MCF 10A (cell line): ENCODE measurements at regions of chr4 and their contacts with region 1.

Region 1: GRCh38 chr4:183261953-183262775 is 57.9 kb downstream of the CLDN22 start:
- DNase-seq: peak; percentile 84
- H3K4me3 Mint-ChIP-seq: no peak overlapping the region
- H3K27ac Mint-ChIP-seq: peak overlapping the region; percentile 52
- H3K4me1 Mint-ChIP-seq: peaks cover 5% of the 10 kb centered on the region
- H3K27me3 Mint-ChIP-seq: no peaks in the 10 kb centered on the region
- CTCF ChIP-seq: peak; percentile 68

Region 2: DNA sequence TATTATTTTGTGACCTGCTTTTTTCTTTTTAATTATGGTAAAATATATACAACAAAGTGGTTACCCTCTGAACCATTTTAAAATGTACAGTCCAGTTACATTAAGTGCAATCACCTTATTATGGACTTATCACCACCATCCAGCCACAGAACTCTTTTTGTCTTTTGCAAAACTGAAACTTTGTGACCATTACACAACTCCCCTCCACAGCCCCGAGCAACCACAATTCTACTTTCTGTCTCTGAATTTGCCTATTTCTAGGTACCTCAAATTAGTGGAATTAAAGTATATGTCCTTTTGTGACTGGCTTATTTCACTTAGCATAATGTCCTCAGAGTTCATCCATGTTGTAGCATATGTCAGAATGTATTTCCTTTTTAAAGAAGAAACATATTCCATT is 202.4 kb before region 1 on chr4:
- CTCF ChIA-PET with region 1: interaction called, 16 read pairs
- POLR2A ChIA-PET with region 1: no interaction called
- intact Hi-C with region 1: no loop called
- DNase-seq: no peak
- H3K4me3 Mint-ChIP-seq: no peak overlapping the region
- H3K27ac Mint-ChIP-seq: no peak overlapping the region
- H3K4me1 Mint-ChIP-seq: no peaks in the 10 kb centered on the region
- H3K27me3 Mint-ChIP-seq: no peaks in the 10 kb centered on the region
- CTCF ChIP-seq: no peak

Region 3: GRCh38 chr4:183098723-183099536 is 163.2 kb before region 1 on chr4 and contains the start of gene WWC2:
- CTCF ChIA-PET with region 1: interaction called, 11 read pairs
- POLR2A ChIA-PET with region 1: interaction called, 4 read pairs
- intact Hi-C with region 1: loop called (anchors 1 kb)
- DNase-seq: peak; percentile 92
- H3K4me3 Mint-ChIP-seq: peak within 1 kb of the TSS; percentile 78
- H3K27ac Mint-ChIP-seq: peak within 1 kb of the TSS; percentile 76
- H3K4me1 Mint-ChIP-seq: peaks cover 17% of the 10 kb centered on the region
- H3K27me3 Mint-ChIP-seq: no peaks in the 10 kb centered on the region
- CTCF ChIP-seq: no peak
- total RNA-seq, gene WWC2: 38.6 and 42.4 TPM in 2 replicates

Region 4: GRCh38 chr4:183249857-183250256 is 12.3 kb before region 1 on chr4:
- CTCF ChIA-PET with region 1: interaction called, 122 read pairs
- POLR2A ChIA-PET with region 1: interaction called, 5 read pairs
- intact Hi-C with region 1: no loop called
- DNase-seq: peak; percentile 54
- H3K4me3 Mint-ChIP-seq: no peak overlapping the region
- H3K27ac Mint-ChIP-seq: no peak overlapping the region
- H3K4me1 Mint-ChIP-seq: no peaks in the 10 kb centered on the region
- H3K27me3 Mint-ChIP-seq: no peaks in the 10 kb centered on the region
- CTCF ChIP-seq: peak; percentile 43

Region 5: GRCh38 chr4:183407128-183407585 is 145.0 kb after region 1 on chr4:
- CTCF ChIA-PET with region 1: interaction called, 7 read pairs
- POLR2A ChIA-PET with region 1: interaction called, 3 read pairs
- intact Hi-C with region 1: loop called (anchors 1 kb)
- DNase-seq: peak; percentile 75
- H3K4me3 Mint-ChIP-seq: peak overlapping the region; percentile 38
- H3K27ac Mint-ChIP-seq: no peak overlapping the region
- H3K4me1 Mint-ChIP-seq: peaks cover 13% of the 10 kb centered on the region
- H3K27me3 Mint-ChIP-seq: no peaks in the 10 kb centered on the region
- CTCF ChIP-seq: peak; percentile 98